AG04450 (cell line): ENCODE measurements at regions of chr14 and their contacts with region 1.

Region 1: GRCh38 chr14:21103710-21104447 is 3.0 kb downstream of the TMEM253 start:
- DNase-seq: peak; percentile 90
- H3K4me3 ChIP-seq: peak overlapping the region; percentile 75
- H3K27ac ChIP-seq: peak overlapping the region; percentile 98
- H3K27me3 ChIP-seq: peaks cover 6% of the 10 kb centered on the region
- CTCF ChIP-seq: peak; percentile 84

Region 2: GRCh38 chr14:21003788-21004346 is 100.0 kb before region 1 on chr14:
- CTCF ChIA-PET with region 1: interaction called, 19 read pairs
- POLR2A ChIA-PET with region 1: no interaction called
- DNase-seq: no peak
- H3K4me3 ChIP-seq: no peak overlapping the region
- H3K27ac ChIP-seq: no peak overlapping the region
- H3K27me3 ChIP-seq: no peaks in the 10 kb centered on the region
- CTCF ChIP-seq: no peak

Region 3: DNA sequence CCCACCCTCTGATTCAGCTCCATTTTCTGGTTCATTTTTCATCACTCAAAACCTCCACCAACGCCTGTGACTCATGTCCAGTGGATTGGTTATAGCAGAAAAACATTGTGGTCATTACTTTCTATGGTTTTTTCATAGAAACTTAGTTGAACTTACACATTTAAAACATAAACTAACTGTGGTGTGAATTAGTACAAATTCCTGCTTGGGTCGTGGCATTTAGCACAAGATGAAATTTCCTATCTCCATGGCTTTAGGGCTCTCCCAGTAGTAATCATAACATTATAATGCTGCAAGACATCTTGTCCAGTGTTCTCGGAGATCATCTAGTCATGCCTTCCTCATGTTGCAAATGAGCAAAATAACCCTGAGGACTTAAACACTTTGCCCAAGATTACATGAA is 54.6 kb before region 1 on chr14:
- CTCF ChIA-PET with region 1: interaction called, 11 read pairs
- POLR2A ChIA-PET with region 1: no interaction called
- DNase-seq: no peak
- H3K4me3 ChIP-seq: no peak overlapping the region
- H3K27ac ChIP-seq: no peak overlapping the region
- H3K27me3 ChIP-seq: peaks cover 10% of the 10 kb centered on the region
- CTCF ChIP-seq: no peak

Region 4: GRCh38 chr14:21071225-21072030 is 32.5 kb before region 1 on chr14:
- CTCF ChIA-PET with region 1: interaction called, 153 read pairs
- POLR2A ChIA-PET with region 1: interaction called, 24 read pairs
- DNase-seq: peak; percentile 88
- H3K4me3 ChIP-seq: peak overlapping the region; percentile 82
- H3K27ac ChIP-seq: peak overlapping the region; percentile 95
- H3K27me3 ChIP-seq: no peaks in the 10 kb centered on the region
- CTCF ChIP-seq: no peak

Region 5: DNA sequence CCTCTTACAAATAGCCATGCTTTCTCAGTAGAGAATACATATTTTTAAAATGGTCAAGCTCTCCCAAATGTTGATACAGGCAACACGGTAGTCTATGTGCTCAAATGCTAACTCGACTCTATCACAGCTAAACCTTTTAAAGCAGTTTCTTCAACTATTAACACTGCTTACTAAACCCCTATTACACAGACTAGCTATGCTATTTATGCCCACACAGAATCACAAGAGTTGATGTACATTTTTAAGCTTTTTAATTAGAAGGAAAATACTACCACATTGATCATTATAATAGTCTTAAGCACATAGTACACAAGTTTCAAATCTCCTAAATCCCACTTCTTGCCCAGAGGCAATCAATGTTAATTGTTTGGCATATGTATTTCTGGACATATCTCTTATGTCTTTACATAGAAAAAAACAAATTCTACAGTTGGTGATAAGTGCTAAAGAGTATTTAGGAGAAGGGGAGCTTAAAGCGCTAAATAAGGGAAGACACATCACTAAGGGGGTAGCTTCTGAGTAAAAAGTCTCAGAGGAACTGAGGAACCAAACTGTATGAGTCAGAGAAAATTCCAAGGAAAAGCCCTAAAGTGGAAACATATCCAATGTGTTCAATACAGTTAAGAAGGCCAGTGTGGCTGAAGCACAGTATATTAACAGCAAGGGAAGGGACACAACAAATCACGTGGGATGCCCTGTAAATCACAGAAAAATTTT is 151.7 kb after region 1 on chr14:
- CTCF ChIA-PET with region 1: no interaction called
- POLR2A ChIA-PET with region 1: no interaction called
- DNase-seq: no peak
- H3K4me3 ChIP-seq: no peak overlapping the region
- H3K27ac ChIP-seq: no peak overlapping the region
- H3K27me3 ChIP-seq: no peaks in the 10 kb centered on the region
- CTCF ChIP-seq: no peak